Caco-2 (cell line): ENCODE measurements at regions of chr11 and their contacts with region 1.

Region 1: GRCh38 chr11:34302046-34302921 is 55.5 kb downstream of the ABTB2 start:
- DNase-seq: no peak
- H3K4me3 ChIP-seq: no peak overlapping the region
- H3K4me3 Mint-ChIP-seq: no peak overlapping the region
- H3K27ac Mint-ChIP-seq: no peak overlapping the region
- H3K4me1 ChIP-seq: no peaks in the 10 kb centered on the region
- H3K4me1 Mint-ChIP-seq: no peaks in the 10 kb centered on the region
- H3K27me3 ChIP-seq: no peaks in the 10 kb centered on the region
- H3K27me3 Mint-ChIP-seq: peaks cover 3% of the 10 kb centered on the region
- CTCF ChIP-seq: no peak

Region 2: DNA sequence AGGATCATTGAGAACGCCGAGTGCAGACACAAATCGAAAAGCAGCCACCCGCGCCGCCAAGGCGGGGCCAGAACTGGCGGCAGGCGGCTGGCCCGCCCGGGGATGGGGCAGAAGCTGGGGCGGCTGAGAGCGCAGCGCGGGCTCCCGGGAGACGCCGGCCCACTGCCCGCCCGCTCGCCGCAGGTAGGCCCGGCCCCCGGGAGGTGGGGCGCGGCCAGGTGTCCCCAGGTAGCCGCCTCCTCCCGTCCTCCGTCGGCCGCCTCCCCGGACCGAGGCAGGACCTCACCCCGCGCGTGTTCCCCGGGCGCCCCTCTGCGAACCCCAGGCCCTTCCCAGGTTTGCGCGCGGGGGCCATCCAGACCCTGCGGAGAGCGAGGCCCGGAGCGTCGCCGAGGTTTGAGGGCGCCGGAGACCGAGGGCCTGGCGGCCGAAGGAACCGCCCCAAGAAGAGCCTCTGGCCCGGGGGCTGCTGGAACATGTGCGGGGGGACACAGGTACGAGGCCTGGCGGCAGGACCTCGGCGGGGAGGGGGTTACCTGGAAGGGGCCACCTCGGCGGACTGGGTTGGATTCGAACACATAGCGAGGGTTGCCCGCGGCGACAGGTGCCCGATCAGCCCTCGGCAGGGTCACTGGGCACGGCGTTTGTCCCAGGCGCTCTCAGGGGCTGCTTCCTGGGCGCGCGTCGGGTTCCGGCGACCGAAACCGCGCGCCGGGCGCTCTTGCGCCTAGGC is 1472.4 kb before region 1 on chr11 and contains the start of gene PRRG4:
- CTCF ChIA-PET with region 1: no interaction called
- POLR2A ChIA-PET with region 1: no interaction called
- intact Hi-C with region 1: loop called (anchors 10 kb)
- DNase-seq: peak; percentile 79 to 91
- H3K4me3 ChIP-seq: peak within 1 kb of the TSS; percentile 98
- H3K4me3 Mint-ChIP-seq: peak within 1 kb of the TSS; percentile 86
- H3K27ac Mint-ChIP-seq: peak within 1 kb of the TSS; percentile 83
- H3K4me1 ChIP-seq: peaks cover 5% of the 10 kb centered on the region
- H3K4me1 Mint-ChIP-seq: peaks cover 11% of the 10 kb centered on the region
- H3K27me3 ChIP-seq: no peaks in the 10 kb centered on the region
- H3K27me3 Mint-ChIP-seq: no peaks in the 10 kb centered on the region
- CTCF ChIP-seq: no peak
- total RNA-seq, gene PRRG4: 6.8 and 6.9 TPM in 2 replicates

Region 3: GRCh38 chr11:34468209-34468841 is 166.0 kb after region 1 on chr11:
- CTCF ChIA-PET with region 1: no interaction called
- POLR2A ChIA-PET with region 1: no interaction called
- intact Hi-C with region 1: no loop called
- DNase-seq: peak; percentile 53 to 54
- H3K4me3 ChIP-seq: no peak overlapping the region
- H3K4me3 Mint-ChIP-seq: no peak overlapping the region
- H3K27ac Mint-ChIP-seq: no peak overlapping the region
- H3K4me1 ChIP-seq: no peaks in the 10 kb centered on the region
- H3K4me1 Mint-ChIP-seq: no peaks in the 10 kb centered on the region
- H3K27me3 ChIP-seq: no peaks in the 10 kb centered on the region
- H3K27me3 Mint-ChIP-seq: no peaks in the 10 kb centered on the region
- CTCF ChIP-seq: peak; percentile 80 to 89